Dendritic cell treated with granulocyte-macrophage colony-stimulating factor and Interleukin-4, amounts not matched to agents 40 ng/mL and 50 ng/mL, for 4 days (primary cell): ENCODE measurements at regions of chr12 and their contacts with region 1.

Region 1: DNA sequence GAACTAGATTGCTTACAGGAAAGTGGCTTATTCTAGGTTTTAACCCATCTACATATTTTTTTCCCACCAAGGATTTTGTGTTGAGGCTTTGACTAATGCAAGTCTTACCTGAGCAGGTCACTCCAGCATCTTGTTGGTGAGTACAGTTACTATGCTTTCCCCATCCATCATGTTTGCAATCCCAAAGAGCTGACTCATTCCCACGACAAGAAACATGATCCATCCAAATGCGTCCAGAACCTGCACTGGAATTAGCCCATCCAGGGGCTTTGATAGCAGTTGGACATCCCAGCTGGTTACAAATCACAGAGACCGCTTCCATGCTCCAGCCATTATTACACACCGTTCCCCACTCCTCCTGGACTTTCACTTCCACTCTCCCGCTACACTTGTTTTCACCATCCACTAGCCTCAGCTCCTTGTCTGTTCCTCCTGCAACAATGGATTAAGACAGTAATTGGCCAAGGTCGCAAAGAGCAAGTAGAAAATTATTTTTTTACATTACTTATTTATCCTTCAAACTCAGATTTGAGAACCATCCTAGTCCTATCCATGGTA is 2.5 kb downstream of the CD163 start:
- H3K4me3 Mint-ChIP-seq: peak overlapping the region; percentile 83
- H3K27ac Mint-ChIP-seq: peak overlapping the region; percentile 90
- H3K4me1 Mint-ChIP-seq: peaks cover 59% of the 10 kb centered on the region
- H3K27me3 Mint-ChIP-seq: no peaks in the 10 kb centered on the region

Region 2: GRCh38 chr12:7171854-7172253 is 329.3 kb before region 1 on chr12:
- intact Hi-C with region 1: no loop called
- H3K4me3 Mint-ChIP-seq: no peak overlapping the region
- H3K27ac Mint-ChIP-seq: no peak overlapping the region
- H3K4me1 Mint-ChIP-seq: no peaks in the 10 kb centered on the region
- H3K27me3 Mint-ChIP-seq: peaks cover 9% of the 10 kb centered on the region

Region 3: GRCh38 chr12:7439579-7440505 is 61.3 kb before region 1 on chr12:
- intact Hi-C with region 1: loop called (anchors 10 kb)
- H3K4me3 Mint-ChIP-seq: peak overlapping the region; percentile 71
- H3K27ac Mint-ChIP-seq: peak overlapping the region; percentile 45
- H3K4me1 Mint-ChIP-seq: peaks cover 37% of the 10 kb centered on the region
- H3K27me3 Mint-ChIP-seq: peaks cover 30% of the 10 kb centered on the region

Region 4: DNA sequence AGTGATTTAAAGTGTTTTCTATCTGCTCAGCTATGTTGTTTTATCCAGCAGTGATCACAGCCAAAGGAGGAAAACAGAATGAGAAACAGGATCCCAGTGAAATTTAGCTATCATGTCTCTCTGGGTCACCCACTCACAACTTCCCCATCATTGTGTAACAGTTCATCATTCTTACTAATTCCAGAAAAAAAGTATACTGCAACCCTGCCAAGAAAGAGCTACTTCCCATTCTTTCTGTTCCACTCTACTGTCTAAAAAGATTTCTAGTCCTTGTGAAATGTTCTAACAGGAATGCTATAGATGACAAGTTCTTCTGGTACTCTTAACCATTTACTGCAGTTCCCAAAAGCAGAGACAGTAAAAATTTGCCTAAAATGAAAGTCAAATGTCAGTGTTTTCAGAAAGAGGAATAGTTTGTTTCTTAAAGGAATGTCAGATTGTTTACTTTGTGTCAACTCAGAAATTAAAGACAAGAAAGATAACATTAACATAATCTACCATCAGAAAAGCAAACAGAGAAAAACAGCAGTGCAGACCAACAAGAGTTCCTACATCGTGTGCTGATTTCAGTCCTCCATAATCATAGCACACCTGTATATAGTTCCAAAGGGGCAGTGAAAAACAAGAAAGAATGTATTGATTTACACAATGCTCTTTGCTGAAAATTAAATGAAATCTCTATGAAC is 41.8 kb after region 1 on chr12:
- intact Hi-C with region 1: loop called (anchors 2 kb)
- H3K4me3 Mint-ChIP-seq: peak overlapping the region; percentile 21
- H3K27ac Mint-ChIP-seq: peak overlapping the region; percentile 93
- H3K4me1 Mint-ChIP-seq: peaks cover 52% of the 10 kb centered on the region
- H3K27me3 Mint-ChIP-seq: no peaks in the 10 kb centered on the region

Region 5: GRCh38 chr12:7583571-7583970 is 82.5 kb after region 1 on chr12:
- intact Hi-C with region 1: loop called (anchors 5 kb)
- H3K4me3 Mint-ChIP-seq: no peak overlapping the region
- H3K27ac Mint-ChIP-seq: no peak overlapping the region
- H3K4me1 Mint-ChIP-seq: peaks cover 33% of the 10 kb centered on the region
- H3K27me3 Mint-ChIP-seq: peaks cover 2% of the 10 kb centered on the region

Region 6: GRCh38 chr12:7948589-7949260 is 447.6 kb after region 1 on chr12:
- intact Hi-C with region 1: no loop called
- H3K4me3 Mint-ChIP-seq: no peak overlapping the region
- H3K27ac Mint-ChIP-seq: peak overlapping the region; percentile 71
- H3K4me1 Mint-ChIP-seq: peaks cover 11% of the 10 kb centered on the region
- H3K27me3 Mint-ChIP-seq: no peaks in the 10 kb centered on the region